Activated naive CD8-positive, alpha-beta T cell treated with anti-CD3 and anti-CD28 coated beads, Interleukin-2, amount 10 ng/mL, durations not matched to agents 7 days and 5 days (primary cell): ENCODE measurements at regions of chr17 and their contacts with region 1.

Region 1: DNA sequence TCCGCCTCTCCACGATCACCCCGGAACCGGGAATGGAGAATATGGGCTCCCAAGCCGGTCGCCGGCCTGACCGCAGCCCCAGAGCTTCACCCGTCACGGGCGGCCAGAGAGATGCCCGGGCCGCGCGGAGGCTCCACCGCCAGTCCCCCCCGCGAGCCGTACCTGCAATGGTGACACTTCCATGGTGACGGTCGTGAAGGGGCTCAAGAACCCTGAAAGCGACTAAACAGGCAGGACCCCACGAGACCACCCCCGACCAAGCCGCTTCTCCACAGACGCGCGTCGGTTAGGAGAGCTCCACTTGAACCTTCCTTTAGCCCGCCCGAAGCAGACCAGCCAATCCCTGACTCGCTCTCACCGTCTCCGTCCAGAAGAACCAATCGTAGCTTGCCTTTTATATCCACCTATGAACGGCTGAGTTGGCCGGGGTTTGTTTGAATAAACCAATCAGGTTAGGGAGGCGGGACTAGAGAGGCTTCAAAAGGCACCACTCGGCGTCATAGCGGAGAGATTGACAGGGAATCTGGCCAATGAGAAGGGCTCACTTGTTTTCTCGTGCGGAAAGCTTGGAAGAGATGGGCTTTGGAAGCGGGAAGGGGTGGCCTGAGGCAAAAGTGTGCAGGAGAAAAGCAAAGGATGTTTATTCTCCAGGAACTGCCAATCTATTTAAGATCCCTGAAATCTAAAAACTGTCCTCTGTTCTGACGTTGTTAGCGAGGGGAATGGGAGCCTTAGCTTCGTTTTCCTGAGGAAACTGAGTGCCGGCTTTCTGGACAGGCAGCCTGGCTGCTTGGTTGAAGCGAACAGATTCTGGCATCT is at the start of gene TOP2A:
- DNase-seq: peak; percentile 95
- ATAC-seq: peak; percentile 96
- H3K4me3 Mint-ChIP-seq: peak within 1 kb of the TSS; percentile 99
- H3K27ac Mint-ChIP-seq: peak within 1 kb of the TSS; percentile 97
- H3K4me1 Mint-ChIP-seq: peaks cover 33% of the 10 kb centered on the region
- H3K27me3 Mint-ChIP-seq: no peaks in the 10 kb centered on the region
- total RNA-seq, gene TOP2A: 313 to 314 TPM

Region 2: GRCh38 chr17:40355123-40355803 is 62.6 kb before region 1 on chr17:
- POLR2A ChIA-PET with region 1: no interaction called
- DNase-seq: peak; percentile 90
- ATAC-seq: peak; percentile 66
- H3K4me3 Mint-ChIP-seq: no peak overlapping the region
- H3K27ac Mint-ChIP-seq: no peak overlapping the region
- H3K4me1 Mint-ChIP-seq: peaks cover 18% of the 10 kb centered on the region
- H3K27me3 Mint-ChIP-seq: peaks cover 4% of the 10 kb centered on the region

Region 3: DNA sequence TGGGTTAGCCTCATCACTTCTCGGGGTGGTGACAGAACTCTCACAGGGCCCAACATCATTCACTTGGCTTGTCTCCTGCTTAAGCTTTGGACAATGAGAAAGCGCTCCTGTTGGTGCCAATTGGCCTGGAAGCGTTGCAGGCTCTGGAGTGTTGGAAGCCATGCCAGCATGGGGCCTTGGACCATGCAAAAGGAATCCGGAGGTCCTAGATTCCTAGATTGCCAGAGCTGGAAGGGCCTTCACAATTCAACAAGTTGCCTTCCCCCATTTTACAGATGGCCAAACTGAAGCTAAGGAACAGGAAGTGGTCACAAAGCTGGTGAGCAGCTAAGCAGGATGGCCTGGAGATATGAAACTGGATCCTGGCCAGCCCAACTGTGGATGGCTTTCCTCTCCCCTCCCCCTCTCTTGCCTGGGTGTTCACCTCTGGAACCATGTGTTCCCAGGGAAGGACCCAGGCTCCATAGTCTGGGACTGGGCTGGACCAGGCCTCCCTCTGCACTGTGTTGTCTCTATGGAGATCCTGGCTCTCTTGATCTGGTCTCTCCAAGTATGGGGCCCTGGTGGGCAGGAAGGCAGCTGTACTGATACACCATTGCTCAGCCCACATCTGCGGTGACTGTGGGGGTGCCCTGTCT is 19.4 kb after region 1 on chr17:
- POLR2A ChIA-PET with region 1: interaction called, 11 read pairs
- DNase-seq: no peak
- ATAC-seq: peak; percentile 65
- H3K4me3 Mint-ChIP-seq: no peak overlapping the region
- H3K27ac Mint-ChIP-seq: peak overlapping the region; percentile 34
- H3K4me1 Mint-ChIP-seq: peaks cover 14% of the 10 kb centered on the region
- H3K27me3 Mint-ChIP-seq: peaks cover 6% of the 10 kb centered on the region

Region 4: GRCh38 chr17:40443583-40444327 is 25.9 kb after region 1 on chr17:
- POLR2A ChIA-PET with region 1: interaction called, 20 read pairs
- DNase-seq: peak; percentile 86
- ATAC-seq: peak; percentile 77
- H3K4me3 Mint-ChIP-seq: peak overlapping the region; percentile 89
- H3K27ac Mint-ChIP-seq: peak overlapping the region; percentile 95
- H3K4me1 Mint-ChIP-seq: peaks cover 44% of the 10 kb centered on the region
- H3K27me3 Mint-ChIP-seq: peaks cover 2% of the 10 kb centered on the region

Region 5: GRCh38 chr17:40480501-40481003 is 62.7 kb after region 1 on chr17:
- POLR2A ChIA-PET with region 1: interaction called, 10 read pairs
- DNase-seq: peak; percentile 81
- ATAC-seq: peak; percentile 89
- H3K4me3 Mint-ChIP-seq: peak overlapping the region; percentile 75
- H3K27ac Mint-ChIP-seq: peak overlapping the region; percentile 97
- H3K4me1 Mint-ChIP-seq: peaks cover 66% of the 10 kb centered on the region
- H3K27me3 Mint-ChIP-seq: no peaks in the 10 kb centered on the region

Region 6: DNA sequence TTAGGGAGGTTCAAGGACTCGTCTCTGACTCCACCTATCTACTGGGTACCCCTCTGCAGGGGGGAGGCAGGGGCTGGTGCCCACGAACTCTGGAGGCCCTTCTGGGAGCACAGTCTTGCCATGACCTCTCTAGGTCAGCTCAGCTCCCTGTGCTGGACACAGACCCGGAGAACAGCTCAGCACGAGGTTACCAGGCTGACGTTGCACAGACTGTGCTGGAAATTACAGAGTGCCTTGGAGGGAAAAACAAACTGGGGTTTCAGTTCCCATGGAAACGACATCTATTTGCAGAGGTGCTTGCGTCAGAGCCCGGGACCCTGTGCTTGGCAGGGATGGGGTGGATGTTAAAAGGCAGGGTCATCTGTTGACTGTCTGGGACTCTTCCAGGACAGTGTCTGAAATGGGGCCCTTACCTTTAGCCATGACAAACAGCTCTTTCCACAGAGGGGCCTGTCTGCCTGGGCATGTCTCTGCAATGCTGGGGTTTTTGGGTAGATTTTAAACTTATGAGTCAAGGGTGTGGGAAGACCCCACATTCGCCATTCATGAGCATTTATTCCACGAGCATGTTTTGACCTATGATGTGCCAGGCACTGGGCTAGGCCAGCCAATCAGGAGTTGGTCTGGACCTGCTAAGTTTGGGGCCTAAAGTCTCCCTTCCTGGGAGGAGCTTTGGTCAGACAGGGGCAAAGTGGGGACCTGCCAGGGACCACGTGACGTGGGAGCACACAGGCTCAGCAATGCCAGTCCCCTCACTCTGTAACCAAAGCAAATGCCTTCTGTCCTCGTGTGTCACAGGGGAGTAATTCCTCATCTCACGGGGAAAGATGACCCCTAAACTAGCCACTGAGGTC is 125.0 kb after region 1 on chr17:
- POLR2A ChIA-PET with region 1: interaction called, 11 read pairs
- DNase-seq: peak; percentile 41
- ATAC-seq: peak; percentile 8
- H3K4me3 Mint-ChIP-seq: peak overlapping the region; percentile 68
- H3K27ac Mint-ChIP-seq: peak overlapping the region; percentile 86
- H3K4me1 Mint-ChIP-seq: peaks cover 73% of the 10 kb centered on the region
- H3K27me3 Mint-ChIP-seq: peaks cover 2% of the 10 kb centered on the region